Psoas muscle (tissue), 8 donors: ENCODE measurements at regions of chr12 and their contacts with region 1.

Region 1: DNA sequence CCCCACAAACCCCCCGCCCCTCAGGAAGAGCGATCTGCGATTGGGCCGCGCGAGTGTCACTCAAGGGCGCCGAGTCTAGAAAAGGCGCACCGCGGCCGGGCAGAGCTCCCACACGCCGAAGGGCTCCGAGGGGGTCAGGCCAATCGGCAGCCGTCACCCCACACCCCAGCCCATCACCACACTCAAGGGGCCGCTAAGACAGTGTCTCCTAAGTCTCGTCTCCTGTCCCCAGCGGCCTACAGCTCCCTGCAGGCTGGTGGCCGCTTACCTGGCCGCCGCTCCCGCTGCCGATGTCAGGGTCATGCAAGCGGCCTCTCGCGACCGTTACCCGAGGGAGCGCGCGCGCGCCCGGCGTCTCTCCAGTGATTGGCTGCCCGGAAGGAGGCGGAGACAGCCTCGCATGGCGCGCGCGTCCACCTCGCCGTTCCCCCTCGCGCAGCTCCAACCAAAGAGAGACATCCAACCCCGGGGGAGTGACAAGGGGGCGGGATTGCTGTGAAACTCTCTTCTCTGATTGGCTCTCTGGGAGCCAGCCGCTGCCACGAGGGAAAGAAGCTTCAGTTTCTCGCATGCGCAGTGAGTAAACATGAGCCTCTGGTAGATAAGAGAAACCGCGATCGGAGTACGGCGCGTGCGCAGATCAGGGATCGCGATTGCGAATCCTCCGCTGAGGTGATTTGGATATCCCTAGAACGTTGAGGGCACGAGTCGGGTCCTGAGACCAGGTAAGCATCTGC is at the starts of genes MPHOSPH9 and MTRFR:
- DNase-seq: peak; percentile 99
- ATAC-seq: peak; percentile 98 to 99 (median 98)
- H3K4me3 ChIP-seq: peak within 1 kb of the TSS; percentile 100
- H3K27ac ChIP-seq: peak within 1 kb of the TSS; percentile 95
- H3K4me1 ChIP-seq: peaks cover 35% of the 10 kb centered on the region
- H3K27me3 ChIP-seq: no peaks in the 10 kb centered on the region
- CTCF ChIP-seq: no peak
- total RNA-seq, gene MPHOSPH9: 8.7 to 14.4 (median 12.7) TPM
- total RNA-seq, gene MTRFR: 7.3 to 9.9 (median 8.6) TPM

Region 2: GRCh38 chr12:122526683-122527477 is 706.1 kb before region 1 on chr12 and contains the starts of genes KNTC1 and RSRC2:
- intact Hi-C with region 1: loop called in 1 of 2 experiments (anchors 5 kb)
- DNase-seq: peak; percentile 95 to 98
- ATAC-seq: peak; percentile 93 to 98 (median 97)
- H3K4me3 ChIP-seq: peak within 1 kb of the TSS; percentile 85
- H3K27ac ChIP-seq: peak within 1 kb of the TSS; percentile 98
- H3K4me1 ChIP-seq: peaks cover 48% of the 10 kb centered on the region
- H3K27me3 ChIP-seq: no peaks in the 10 kb centered on the region
- CTCF ChIP-seq: no peak
- total RNA-seq, gene KNTC1: 1.5 to 2.5 (median 2.2) TPM
- total RNA-seq, gene RSRC2: 44.0 to 64.6 (median 53.3) TPM

Region 3: DNA sequence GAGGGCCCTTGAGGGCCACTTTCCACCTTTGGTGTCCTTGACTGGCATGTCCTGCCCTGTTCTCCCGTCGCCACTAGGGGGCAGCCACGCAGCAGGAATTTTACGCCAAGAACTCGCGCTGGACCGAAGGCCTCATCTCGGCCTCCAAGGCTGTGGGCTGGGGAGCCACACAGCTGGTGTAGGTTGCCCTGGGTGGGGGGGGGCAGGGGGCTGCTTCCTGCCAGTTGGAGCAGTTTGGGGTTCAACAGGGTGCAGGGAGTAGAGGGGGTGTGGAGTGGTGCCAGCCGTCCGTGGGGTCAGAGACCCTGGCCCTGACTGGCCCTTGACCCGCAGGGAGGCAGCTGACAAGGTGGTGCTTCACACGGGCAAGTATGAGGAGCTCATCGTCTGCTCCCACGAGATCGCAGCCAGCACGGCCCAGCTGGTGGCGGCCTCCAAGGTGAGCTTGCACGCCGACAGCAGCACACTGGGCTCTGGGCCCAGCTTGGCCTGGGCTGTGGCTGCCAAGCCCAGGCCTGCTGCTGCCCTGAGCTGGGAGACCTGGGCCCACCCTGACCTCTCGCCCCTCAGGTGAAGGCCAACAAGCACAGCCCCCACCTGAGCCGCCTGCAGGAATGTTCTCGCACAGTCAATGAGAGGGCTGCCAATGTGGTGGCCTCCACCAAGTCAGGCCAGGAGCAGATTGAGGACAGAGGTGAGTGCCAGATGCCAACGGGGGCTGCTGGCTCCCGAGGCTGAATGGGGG is 372.5 kb before region 1 on chr12:
- intact Hi-C with region 1: loop called in 1 of 2 experiments (anchors 5 kb)
- DNase-seq: peak; percentile 88 to 93
- ATAC-seq: peak; percentile 84 to 94 (median 86)
- H3K4me3 ChIP-seq: no peak overlapping the region
- H3K27ac ChIP-seq: peak overlapping the region; percentile 14
- H3K4me1 ChIP-seq: peaks cover 5% of the 10 kb centered on the region
- H3K27me3 ChIP-seq: no peaks in the 10 kb centered on the region
- CTCF ChIP-seq: peak; percentile 87

Region 4: GRCh38 chr12:122974892-122975789 is 257.8 kb before region 1 on chr12 and contains the start of gene OGFOD2:
- intact Hi-C with region 1: loop called in 1 of 2 experiments (anchors 5 kb)
- DNase-seq: peak; percentile 93 to 96
- ATAC-seq: peak; percentile 93 to 96 (median 93)
- H3K4me3 ChIP-seq: peak within 1 kb of the TSS; percentile 81
- H3K27ac ChIP-seq: peak within 1 kb of the TSS; percentile 95
- H3K4me1 ChIP-seq: peaks cover 35% of the 10 kb centered on the region
- H3K27me3 ChIP-seq: no peaks in the 10 kb centered on the region
- CTCF ChIP-seq: no peak
- total RNA-seq, gene OGFOD2: 6.4 to 12.0 (median 8.5) TPM

Region 5: GRCh38 chr12:123043536-123044001 is 189.4 kb before region 1 on chr12:
- intact Hi-C with region 1: loop called in 1 of 2 experiments (anchors 5 kb)
- DNase-seq: peak; percentile 82 to 93
- ATAC-seq: peak; percentile 93 to 100 (median 99)
- H3K4me3 ChIP-seq: no peak overlapping the region
- H3K27ac ChIP-seq: no peak overlapping the region
- H3K4me1 ChIP-seq: peaks cover 25% of the 10 kb centered on the region
- H3K27me3 ChIP-seq: no peaks in the 10 kb centered on the region
- CTCF ChIP-seq: peak; percentile 72